ENCODE measurements at regions of chr6 and their contacts with region 1.

Region 1: GRCh38 chr6:15420959-15421438 is 175.1 kb downstream of the JARID2 start:
- DNase-seq: peak in 2 of 3 donors; percentile 64 to 75
- H3K4me3 ChIP-seq: peak overlapping the region in 1 of 3 experiments; percentile 40
- H3K4me3 Mint-ChIP-seq: peak overlapping the region; percentile 20 to 70
- H3K27ac ChIP-seq: peak overlapping the region; percentile 54 to 72
- H3K27ac Mint-ChIP-seq: peak overlapping the region; percentile 82 to 92 (median 89)
- H3K4me1 ChIP-seq: peaks cover 35 to 53% of the 10 kb centered on the region in 2 donors
- H3K4me1 Mint-ChIP-seq: peaks cover 67% of the 10 kb centered on the region
- H3K27me3 ChIP-seq: no peaks in the 10 kb centered on the region
- H3K27me3 Mint-ChIP-seq: peaks cover 0 to 1% (median 0%) of the 10 kb centered on the region in 3 donors
- CTCF ChIP-seq: no peak

Region 2: GRCh38 chr6:15365273-15365687 is 55.7 kb before region 1 on chr6:
- intact Hi-C with region 1: loop called in 1 of 2 experiments (anchors 10 kb)
- DNase-seq: peak; percentile 89 to 92 (median 90)
- H3K4me3 ChIP-seq: peak overlapping the region in 1 of 3 experiments; percentile 36
- H3K4me3 Mint-ChIP-seq: peak overlapping the region; percentile 28 to 75
- H3K27ac ChIP-seq: peak overlapping the region; percentile 14 to 75
- H3K27ac Mint-ChIP-seq: peak overlapping the region in 5 of 7 donors; percentile 75 to 91 (median 83)
- H3K4me1 ChIP-seq: peaks cover 78 to 84% of the 10 kb centered on the region in 2 donors
- H3K4me1 Mint-ChIP-seq: peaks cover 37% of the 10 kb centered on the region
- H3K27me3 ChIP-seq: no peaks in the 10 kb centered on the region
- H3K27me3 Mint-ChIP-seq: no peaks in the 10 kb centered on the region
- CTCF ChIP-seq: no peak

Region 3: GRCh38 chr6:15793288-15793687 is 372.3 kb after region 1 on chr6:
- intact Hi-C with region 1: no loop called
- DNase-seq: no peak
- H3K4me3 ChIP-seq: no peak overlapping the region
- H3K4me3 Mint-ChIP-seq: no peak overlapping the region
- H3K27ac ChIP-seq: no peak overlapping the region
- H3K27ac Mint-ChIP-seq: no peak overlapping the region
- H3K4me1 ChIP-seq: peaks cover 21 to 24% of the 10 kb centered on the region in 2 donors
- H3K4me1 Mint-ChIP-seq: peaks cover 31% of the 10 kb centered on the region
- H3K27me3 ChIP-seq: no peaks in the 10 kb centered on the region
- H3K27me3 Mint-ChIP-seq: peaks cover 0 to 1% (median 0%) of the 10 kb centered on the region in 3 donors
- CTCF ChIP-seq: no peak